ENCODE measurements at regions of chr5 and their contacts with region 1.

Region 1: DNA sequence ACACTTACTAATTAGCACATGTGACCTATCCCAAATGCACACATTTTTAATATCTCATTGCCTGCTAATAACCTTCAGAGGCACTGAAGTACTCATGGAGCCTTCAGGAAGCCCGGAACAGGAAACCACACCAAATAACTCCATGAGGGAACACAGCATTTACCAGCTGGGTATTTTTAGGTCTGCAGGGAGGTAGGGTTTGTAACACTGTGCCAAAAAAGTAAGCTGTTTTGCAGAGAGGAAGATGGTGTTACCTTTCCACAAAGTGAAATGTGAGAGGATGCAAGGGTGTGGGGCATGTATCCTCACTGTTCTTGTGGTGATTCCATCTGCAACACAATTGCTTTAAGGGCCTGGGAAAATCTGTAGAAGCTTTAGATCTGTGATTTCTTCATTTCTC is 64.4 kb downstream of the NUDT12 start:
- DNase-seq: peak; percentile 57 to 58
- ATAC-seq: peak; percentile 98 to 99
- H3K4me3 ChIP-seq: peak overlapping the region in 3 of 4 donors; percentile 10 to 20 (median 14)
- H3K27ac ChIP-seq: peak overlapping the region; percentile 77 to 83 (median 77)
- H3K4me1 ChIP-seq: peaks cover 29 to 32% of the 10 kb centered on the region in 2 donors
- H3K27me3 ChIP-seq: no peaks in the 10 kb centered on the region
- CTCF ChIP-seq: no peak
- POLR2A ChIP-seq: no peak

Region 2: GRCh38 chr5:104186100-104186499 is 687.9 kb after region 1 on chr5:
- in situ Hi-C with region 1: no loop called
- intact Hi-C with region 1: loop called (anchors 10 kb)
- DNase-seq: peak; percentile 76 to 96
- ATAC-seq: peak; percentile 90 to 95
- H3K4me3 ChIP-seq: no peak overlapping the region
- H3K27ac ChIP-seq: peak overlapping the region; percentile 68 to 84 (median 77)
- H3K4me1 ChIP-seq: peaks cover 9 to 11% of the 10 kb centered on the region in 2 donors
- H3K27me3 ChIP-seq: no peaks in the 10 kb centered on the region
- CTCF ChIP-seq: no peak
- POLR2A ChIP-seq: no peak

Measured in gastrocnemius medialis (tissue), 4 donors.